ENCODE measurements at regions of chr15 and their contacts with region 1.

Region 1: DNA sequence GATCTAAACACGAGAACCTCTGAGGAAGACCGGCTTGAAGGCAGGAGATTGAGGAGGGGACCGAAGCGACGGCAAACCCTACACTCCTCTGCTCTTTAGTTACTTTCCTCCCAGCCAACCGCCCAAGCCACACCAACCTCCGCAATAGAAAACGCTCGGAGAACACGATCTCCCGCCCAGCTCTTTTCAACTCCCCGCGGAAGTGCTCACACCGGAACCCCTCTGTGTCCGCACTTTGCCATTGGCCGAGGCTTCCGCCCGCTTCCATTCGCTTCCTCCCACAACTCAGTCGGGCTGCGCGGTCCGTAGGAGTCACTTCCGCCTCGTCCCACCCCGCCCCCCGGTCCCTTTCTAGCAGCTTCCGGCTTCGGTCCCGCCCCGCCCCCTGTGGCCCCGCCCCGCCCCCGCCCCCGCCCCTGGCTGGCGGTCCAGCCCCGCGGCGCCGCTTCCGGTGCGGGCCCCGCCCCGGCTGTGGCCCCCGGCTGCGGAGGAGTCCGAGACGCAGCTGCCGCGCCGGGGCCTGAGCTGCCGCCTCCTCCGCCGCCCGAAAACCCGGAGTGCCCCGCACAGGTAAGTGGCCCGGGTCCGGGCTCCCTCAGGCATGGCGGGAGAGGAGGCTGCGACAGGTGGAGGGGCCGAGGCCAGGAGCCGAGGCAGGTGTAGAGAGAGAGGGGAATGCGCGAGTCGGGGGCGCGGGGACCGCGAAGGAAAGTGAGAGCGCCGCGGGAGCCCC is at the start of gene ARID3B:
- DNase-seq: peak; percentile 72 to 95 (median 90)
- ATAC-seq: peak; percentile 94
- H3K4me3 ChIP-seq: peak within 1 kb of the TSS; percentile 98
- H3K4me3 Mint-ChIP-seq: peak within 1 kb of the TSS; percentile 90 to 99 (median 98)
- H3K27ac ChIP-seq: peak within 1 kb of the TSS; percentile 87
- H3K27ac Mint-ChIP-seq: peak within 1 kb of the TSS; percentile 84 to 99 (median 94)
- H3K4me1 ChIP-seq: peaks cover 18 to 34% of the 10 kb centered on the region in 2 donors
- H3K4me1 Mint-ChIP-seq: peaks cover 46 to 64% (median 55%) of the 10 kb centered on the region in 7 donors
- H3K27me3 ChIP-seq: no peaks in the 10 kb centered on the region
- H3K27me3 Mint-ChIP-seq: no peaks in the 10 kb centered on the region
- total RNA-seq, gene ARID3B: 29.5 to 45.4 (median 36.8) TPM

Region 2: DNA sequence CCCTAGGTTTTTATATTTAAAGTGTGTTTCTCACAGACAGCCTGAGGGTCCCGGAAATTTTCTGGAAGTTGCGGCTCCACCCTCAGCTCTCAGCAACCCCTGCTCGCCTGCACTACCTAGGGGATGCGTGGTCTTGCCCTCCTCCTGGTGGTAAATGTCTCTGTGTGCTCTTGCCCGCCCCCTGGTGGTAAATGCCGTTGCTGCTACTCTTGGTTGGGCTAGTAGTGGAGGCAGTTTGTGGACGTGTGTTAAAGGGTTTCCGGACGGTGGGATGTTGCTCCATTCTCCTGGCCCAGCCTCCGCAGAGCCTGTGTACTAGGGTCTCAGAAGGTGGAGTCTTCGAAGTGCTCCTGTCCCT is 576.2 kb before region 1 on chr15:
- CTCF ChIA-PET with region 1: no interaction called
- POLR2A ChIA-PET with region 1: no interaction called
- intact Hi-C with region 1: no loop called
- DNase-seq: peak; percentile 74 to 89 (median 83)
- ATAC-seq: peak; percentile 95
- H3K4me3 ChIP-seq: peak overlapping the region; percentile 75
- H3K4me3 Mint-ChIP-seq: peak overlapping the region; percentile 75 to 90 (median 84)
- H3K27ac ChIP-seq: peak overlapping the region; percentile 33
- H3K27ac Mint-ChIP-seq: peak overlapping the region; percentile 46 to 94 (median 88)
- H3K4me1 ChIP-seq: peaks cover 15 to 25% of the 10 kb centered on the region in 2 donors
- H3K4me1 Mint-ChIP-seq: peaks cover 23 to 52% (median 45%) of the 10 kb centered on the region in 7 donors
- H3K27me3 ChIP-seq: no peaks in the 10 kb centered on the region
- H3K27me3 Mint-ChIP-seq: peaks cover 0 to 4% (median 0%) of the 10 kb centered on the region in 5 donors

Region 3: DNA sequence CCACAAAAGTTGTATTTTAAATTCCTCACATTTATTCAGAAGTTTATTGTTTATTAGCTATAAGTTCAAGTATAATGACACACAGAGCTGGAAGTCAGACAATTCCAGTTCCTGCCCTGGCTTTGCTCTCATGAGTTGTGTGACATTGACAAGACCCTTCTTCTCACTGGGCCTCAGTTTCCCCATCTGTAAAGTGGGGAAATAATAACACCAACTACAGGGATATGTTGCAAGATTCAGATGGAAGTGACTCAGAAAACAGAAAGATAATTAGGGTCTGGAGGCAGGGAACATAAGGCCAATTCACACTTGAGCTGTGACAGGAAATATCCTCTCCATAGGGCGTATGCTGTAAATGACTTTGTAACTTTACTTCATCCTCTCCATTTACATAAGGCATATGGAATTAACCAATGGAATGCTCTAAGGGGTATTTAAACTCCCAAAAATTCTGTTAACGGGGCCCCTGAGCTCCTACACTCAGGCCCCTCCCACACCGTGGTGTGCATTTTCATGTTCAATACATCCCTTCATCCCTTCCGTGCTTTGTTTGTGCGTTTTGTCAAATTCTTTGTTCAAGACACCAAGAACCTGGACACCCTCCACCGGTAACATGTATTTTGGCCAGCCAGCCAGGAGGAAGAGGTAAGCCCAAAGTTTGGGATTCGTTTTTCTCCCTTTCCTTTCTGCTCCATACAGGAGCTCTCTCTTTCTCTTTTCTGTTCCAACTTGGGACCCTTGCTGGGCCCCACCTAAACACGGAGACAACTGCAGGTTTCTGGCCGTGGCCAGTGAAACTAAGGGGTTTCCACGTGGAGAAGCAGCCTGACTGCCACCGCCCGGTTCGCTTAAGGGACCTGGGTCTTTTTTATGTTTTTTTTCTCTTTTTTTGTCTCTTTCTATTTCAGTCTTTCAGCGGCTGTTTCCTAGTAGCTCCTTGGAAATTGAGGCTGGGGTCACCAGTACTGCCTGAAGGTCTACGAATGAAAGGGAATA is 190.3 kb before region 1 on chr15:
- CTCF ChIA-PET with region 1: no interaction called
- POLR2A ChIA-PET with region 1: no interaction called
- intact Hi-C with region 1: no loop called
- DNase-seq: no peak
- ATAC-seq: no peak
- H3K4me3 ChIP-seq: no peak overlapping the region
- H3K4me3 Mint-ChIP-seq: no peak overlapping the region
- H3K27ac ChIP-seq: no peak overlapping the region
- H3K27ac Mint-ChIP-seq: peak overlapping the region in 1 of 9 donors; percentile 38
- H3K4me1 ChIP-seq: no peaks in the 10 kb centered on the region
- H3K4me1 Mint-ChIP-seq: peaks cover 0 to 3% (median 0%) of the 10 kb centered on the region in 7 donors
- H3K27me3 ChIP-seq: no peaks in the 10 kb centered on the region
- H3K27me3 Mint-ChIP-seq: peaks cover 6 to 33% (median 22%) of the 10 kb centered on the region in 5 donors

Region 4: DNA sequence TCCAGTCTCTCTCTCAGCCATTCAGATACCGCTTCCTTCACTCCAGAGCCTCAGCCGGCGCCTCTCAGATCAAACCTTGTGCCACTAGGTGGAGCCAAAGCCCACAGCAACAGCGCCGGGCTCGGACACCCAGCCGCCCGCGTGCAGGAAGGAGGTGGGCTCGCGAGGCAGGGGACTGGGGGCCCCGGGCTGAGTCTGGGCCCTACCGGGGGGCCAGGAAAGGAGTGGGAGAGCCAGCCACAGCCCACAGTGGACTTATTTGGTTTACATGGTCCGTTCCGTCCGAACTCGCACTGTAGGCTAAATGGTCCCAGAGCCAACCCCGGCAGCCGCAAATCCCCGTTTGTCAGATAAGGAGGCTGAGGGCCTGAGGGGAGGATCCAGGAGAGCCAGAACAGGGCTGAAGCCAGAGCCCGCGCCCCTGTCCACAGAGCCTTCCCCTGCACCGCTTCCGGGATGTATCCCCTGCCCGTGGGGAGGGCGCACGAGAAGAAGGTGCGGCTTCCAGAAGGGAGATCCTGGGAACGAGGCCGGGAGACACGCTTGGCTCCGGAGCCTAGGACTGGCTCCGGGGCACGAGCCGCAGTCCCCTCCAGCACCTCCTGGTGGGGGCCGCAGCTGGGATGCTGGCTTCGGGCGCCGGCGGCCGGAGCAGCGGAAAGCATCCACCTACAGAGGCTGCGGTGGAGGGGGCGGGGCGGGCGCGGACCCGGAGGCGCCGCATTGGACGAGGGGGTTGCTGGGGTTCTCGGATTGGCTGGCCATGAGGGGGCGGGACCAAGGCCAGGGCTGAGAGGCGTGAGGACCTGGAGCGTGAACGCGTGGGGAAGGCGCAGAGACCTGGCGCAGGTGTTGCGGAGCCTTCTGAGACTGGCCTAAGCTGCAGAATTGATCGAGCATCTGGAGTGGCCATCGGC is 166.9 kb before region 1 on chr15:
- CTCF ChIA-PET with region 1: interaction called, 3 read pairs
- POLR2A ChIA-PET with region 1: no interaction called
- intact Hi-C with region 1: loop called (anchors 1 to 2 kb)
- DNase-seq: peak; percentile 82 to 94 (median 91)
- ATAC-seq: peak; percentile 97
- H3K4me3 ChIP-seq: peak overlapping the region; percentile 98
- H3K4me3 Mint-ChIP-seq: peak overlapping the region; percentile 68 to 89 (median 84)
- H3K27ac ChIP-seq: peak overlapping the region; percentile 62
- H3K27ac Mint-ChIP-seq: peak overlapping the region; percentile 18 to 82 (median 40)
- H3K4me1 ChIP-seq: peaks cover 9% of the 10 kb centered on the region in 2 donors
- H3K4me1 Mint-ChIP-seq: peaks cover 0 to 32% (median 15%) of the 10 kb centered on the region in 7 donors
- H3K27me3 ChIP-seq: no peaks in the 10 kb centered on the region
- H3K27me3 Mint-ChIP-seq: peaks cover 0 to 31% (median 5%) of the 10 kb centered on the region in 5 donors

Region 5: GRCh38 chr15:74579001-74579400 is 38.1 kb after region 1 on chr15:
- CTCF ChIA-PET with region 1: no interaction called
- POLR2A ChIA-PET with region 1: no interaction called
- intact Hi-C with region 1: loop called in 1 of 2 experiments (anchors 5 kb)
- DNase-seq: no peak
- ATAC-seq: no peak
- H3K4me3 ChIP-seq: no peak overlapping the region
- H3K4me3 Mint-ChIP-seq: no peak overlapping the region
- H3K27ac ChIP-seq: no peak overlapping the region
- H3K27ac Mint-ChIP-seq: peak overlapping the region in 4 of 9 donors; percentile 14 to 62 (median 54)
- H3K4me1 ChIP-seq: no peaks in the 10 kb centered on the region
- H3K4me1 Mint-ChIP-seq: peaks cover 0 to 16% (median 0%) of the 10 kb centered on the region in 7 donors
- H3K27me3 ChIP-seq: no peaks in the 10 kb centered on the region
- H3K27me3 Mint-ChIP-seq: no peaks in the 10 kb centered on the region

Region 6: DNA sequence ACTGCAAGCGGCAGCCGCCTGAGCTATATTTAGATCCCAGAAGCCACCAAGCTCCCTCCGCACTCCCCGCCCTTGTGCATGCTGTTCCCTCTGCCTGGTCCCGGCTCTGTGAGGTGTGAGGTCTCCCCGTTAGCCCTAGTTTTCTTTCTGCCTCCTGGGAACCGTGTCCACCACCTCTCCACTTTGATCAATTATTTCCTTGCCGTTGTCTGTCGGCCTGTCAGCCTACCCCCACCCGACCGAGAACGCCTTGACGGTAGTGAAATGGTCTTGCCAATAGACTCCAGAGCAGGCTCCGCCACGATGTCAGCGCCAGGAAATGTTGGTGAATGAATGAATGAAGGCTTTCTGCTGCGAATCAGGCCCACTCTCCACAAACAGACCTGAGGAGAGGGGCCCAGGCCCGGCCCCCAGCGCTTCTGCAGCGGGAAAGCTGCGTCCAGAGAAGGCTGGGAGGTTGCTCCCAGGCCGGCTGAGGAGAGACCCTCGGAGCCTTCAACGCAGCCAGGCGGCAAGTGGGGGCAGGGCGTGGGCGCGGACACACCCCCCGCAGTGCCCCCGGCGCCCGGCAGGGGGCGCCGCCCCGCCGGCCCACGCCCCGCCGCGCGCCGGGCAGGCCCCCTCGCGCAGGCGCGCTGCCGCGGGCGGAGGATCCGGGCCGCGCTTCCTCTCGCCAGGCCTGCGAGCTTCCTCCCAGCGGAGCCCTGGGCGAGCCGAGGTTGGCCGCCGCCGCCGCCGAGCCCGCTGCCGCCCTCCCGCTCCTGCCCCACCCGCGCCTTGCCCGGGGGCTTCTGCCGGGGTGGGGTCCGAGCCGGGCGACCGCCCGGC is 240.7 kb after region 1 on chr15 and contains the start of gene CSK:
- CTCF ChIA-PET with region 1: no interaction called
- POLR2A ChIA-PET with region 1: no interaction called
- intact Hi-C with region 1: loop called (anchors 5 kb)
- DNase-seq: peak; percentile 68 to 90 (median 85)
- ATAC-seq: peak; percentile 80
- H3K4me3 ChIP-seq: peak within 1 kb of the TSS; percentile 91
- H3K4me3 Mint-ChIP-seq: peak within 1 kb of the TSS; percentile 87 to 99 (median 96)
- H3K27ac ChIP-seq: peak within 1 kb of the TSS; percentile 92
- H3K27ac Mint-ChIP-seq: peak within 1 kb of the TSS; percentile 90 to 100 (median 98)
- H3K4me1 ChIP-seq: peaks cover 62% of the 10 kb centered on the region in 2 donors
- H3K4me1 Mint-ChIP-seq: peaks cover 64 to 73% (median 70%) of the 10 kb centered on the region in 7 donors
- H3K27me3 ChIP-seq: no peaks in the 10 kb centered on the region
- H3K27me3 Mint-ChIP-seq: no peaks in the 10 kb centered on the region
- total RNA-seq, gene CSK: 163 to 421 (median 228) TPM

Region 7: DNA sequence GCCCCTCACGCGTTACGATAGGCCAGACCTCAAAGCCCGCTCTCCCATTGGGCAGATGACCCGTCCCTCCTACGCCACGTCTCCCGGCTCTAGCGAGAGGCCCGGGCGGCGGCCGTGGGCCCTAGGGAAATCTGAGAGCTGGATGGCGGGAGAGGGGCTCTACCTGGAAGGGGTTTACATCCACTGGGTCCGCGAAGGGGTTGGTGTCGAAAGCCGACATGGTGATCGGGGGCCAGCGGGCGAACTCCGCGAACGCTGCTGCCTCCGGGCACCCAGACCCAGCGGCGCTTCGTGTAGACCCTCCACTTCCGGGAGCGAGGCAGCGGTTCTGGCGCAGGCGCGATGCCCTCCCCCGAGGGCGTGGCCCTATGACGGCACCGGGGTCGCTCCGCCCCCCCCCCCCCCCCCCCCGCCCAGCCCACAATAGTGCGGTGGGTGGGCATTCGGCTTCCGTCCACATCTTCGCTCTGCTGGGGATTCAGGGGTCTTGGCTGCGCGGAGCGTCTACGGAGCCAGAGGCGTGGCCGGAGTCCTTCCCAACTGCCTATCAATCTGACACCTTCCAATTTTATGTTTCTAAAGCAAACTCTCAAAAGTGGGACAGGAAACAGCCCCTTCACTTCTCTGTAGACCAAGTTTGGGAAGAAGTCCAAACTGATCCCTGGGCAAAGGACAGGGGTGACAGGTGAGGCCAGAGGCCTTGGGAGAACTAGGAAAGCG is 332.3 kb after region 1 on chr15 and contains the start of gene SCAMP2:
- CTCF ChIA-PET with region 1: no interaction called
- POLR2A ChIA-PET with region 1: no interaction called
- intact Hi-C with region 1: loop called in 1 of 2 experiments (anchors 1 kb)
- DNase-seq: peak; percentile 83 to 94 (median 91)
- ATAC-seq: peak; percentile 95
- H3K4me3 ChIP-seq: peak within 1 kb of the TSS; percentile 86
- H3K4me3 Mint-ChIP-seq: peak within 1 kb of the TSS; percentile 92 to 100 (median 98)
- H3K27ac ChIP-seq: peak within 1 kb of the TSS; percentile 98
- H3K27ac Mint-ChIP-seq: peak within 1 kb of the TSS; percentile 88 to 99 (median 96)
- H3K4me1 ChIP-seq: peaks cover 38 to 39% of the 10 kb centered on the region in 2 donors
- H3K4me1 Mint-ChIP-seq: peaks cover 31 to 54% (median 45%) of the 10 kb centered on the region in 7 donors
- H3K27me3 ChIP-seq: no peaks in the 10 kb centered on the region
- H3K27me3 Mint-ChIP-seq: peaks cover 0 to 8% (median 0%) of the 10 kb centered on the region in 5 donors
- total RNA-seq, gene SCAMP2: 78.9 to 130 (median 116) TPM

Region 8: DNA sequence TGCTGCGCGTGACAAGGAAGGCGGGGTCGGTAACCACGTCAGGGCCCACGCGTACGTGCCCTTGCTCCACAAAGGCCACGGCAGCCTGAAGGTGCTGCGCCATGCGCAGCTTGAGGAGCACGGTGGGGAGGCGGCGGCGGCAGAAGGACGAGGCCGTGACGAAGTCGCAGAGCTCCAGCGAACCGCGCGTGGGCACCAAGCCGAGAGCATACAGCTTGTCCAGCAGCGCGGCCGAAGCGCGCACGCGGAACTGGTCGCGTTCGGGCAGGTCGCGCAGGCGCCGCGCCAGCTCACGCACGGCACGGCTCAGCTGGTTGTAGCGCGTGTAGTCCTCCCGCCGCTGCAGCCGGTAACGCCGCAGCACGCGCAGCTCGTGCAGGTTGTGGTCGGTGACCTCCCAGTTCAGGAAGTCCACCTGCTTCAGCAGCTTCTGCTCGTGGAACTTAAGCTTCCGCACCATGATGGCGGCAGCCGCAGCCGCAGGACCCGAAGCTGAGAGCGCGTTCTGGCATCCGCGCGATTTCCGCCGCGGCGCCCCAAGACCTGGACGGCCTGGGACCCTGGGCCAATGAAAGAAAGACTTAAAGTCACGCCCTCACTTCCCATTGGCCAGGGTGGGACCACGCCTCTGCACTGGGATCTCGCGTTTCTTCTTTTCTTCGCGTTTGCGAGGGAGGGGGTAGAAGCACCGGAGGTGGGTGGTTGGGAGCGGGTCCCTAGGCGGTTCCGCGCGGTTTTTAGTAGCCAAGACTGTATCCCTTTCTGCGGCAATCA is 1099.0 kb after region 1 on chr15 and contains the start of gene IMP3:
- CTCF ChIA-PET with region 1: no interaction called
- POLR2A ChIA-PET with region 1: no interaction called
- intact Hi-C with region 1: loop called in 1 of 2 experiments (anchors 5 kb)
- DNase-seq: peak; percentile 75 to 96 (median 93)
- ATAC-seq: peak; percentile 95
- H3K4me3 ChIP-seq: peak within 1 kb of the TSS; percentile 97
- H3K4me3 Mint-ChIP-seq: peak within 1 kb of the TSS; percentile 84 to 98 (median 95)
- H3K27ac ChIP-seq: peak within 1 kb of the TSS; percentile 85
- H3K27ac Mint-ChIP-seq: peak within 1 kb of the TSS; percentile 39 to 98 (median 96)
- H3K4me1 ChIP-seq: peaks cover 23 to 24% of the 10 kb centered on the region in 2 donors
- H3K4me1 Mint-ChIP-seq: peaks cover 33 to 49% (median 39%) of the 10 kb centered on the region in 7 donors
- H3K27me3 ChIP-seq: no peaks in the 10 kb centered on the region
- H3K27me3 Mint-ChIP-seq: no peaks in the 10 kb centered on the region
- total RNA-seq, gene IMP3: 32.3 to 100 (median 89.5) TPM

Measured in naive thymus-derived CD4-positive, alpha-beta T cell (primary cell).